ENCODE measurements at regions of chr2 and their contacts with region 1.

Region 1: DNA sequence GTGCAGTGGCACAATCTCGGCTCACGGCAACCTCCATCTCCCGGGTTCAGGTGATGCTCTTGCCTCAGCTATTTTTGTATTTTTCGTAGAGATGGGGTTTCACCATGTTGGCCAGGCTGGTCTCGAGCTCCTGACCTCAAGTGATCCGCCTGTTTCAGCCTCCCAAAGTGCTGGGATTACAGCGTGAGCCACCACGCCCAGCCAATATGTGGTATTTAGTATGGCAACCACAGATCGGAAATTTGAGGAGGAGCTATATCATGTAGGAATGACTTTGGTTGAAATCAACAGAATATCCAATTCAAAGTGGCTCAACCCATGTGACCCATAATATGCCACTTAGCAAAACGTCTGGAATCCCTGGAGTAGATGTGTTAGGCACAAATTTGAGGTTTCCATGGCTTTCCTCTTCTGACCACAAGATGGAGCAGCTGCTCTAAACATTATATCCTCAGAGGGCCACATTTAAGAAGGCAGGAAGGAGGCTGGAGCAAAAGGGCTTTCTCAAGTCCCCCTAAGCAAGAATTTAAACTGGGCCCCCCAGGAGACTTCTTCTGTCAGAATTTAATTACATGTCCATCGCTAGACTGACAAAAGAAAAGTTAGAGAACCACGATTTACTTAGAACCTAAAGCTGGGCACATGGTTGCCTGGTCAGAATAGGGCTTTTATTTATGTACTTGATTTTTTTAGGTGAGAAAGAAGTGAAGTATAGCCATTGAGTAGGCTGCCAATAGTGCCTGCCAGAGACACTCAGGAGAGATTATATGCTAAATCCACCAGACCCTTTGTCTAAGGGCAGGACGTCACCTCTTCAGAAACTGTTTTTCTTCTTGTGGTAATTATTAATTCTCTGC is 49.6 kb upstream of the ITSN2 start:
- DNase-seq: peak; percentile 60
- ATAC-seq: peak; percentile 84
- H3K4me3 Mint-ChIP-seq: no peak overlapping the region
- H3K27ac Mint-ChIP-seq: no peak overlapping the region
- H3K4me1 Mint-ChIP-seq: no peaks in the 10 kb centered on the region
- H3K27me3 Mint-ChIP-seq: peaks cover 3% of the 10 kb centered on the region

Region 2: GRCh38 chr2:24421668-24422067 is 11.7 kb after region 1 on chr2:
- CTCF ChIA-PET with region 1: interaction called, 26 read pairs
- POLR2A ChIA-PET with region 1: no interaction called
- DNase-seq: peak; percentile 64
- ATAC-seq: no peak
- H3K4me3 Mint-ChIP-seq: no peak overlapping the region
- H3K27ac Mint-ChIP-seq: no peak overlapping the region
- H3K4me1 Mint-ChIP-seq: no peaks in the 10 kb centered on the region
- H3K27me3 Mint-ChIP-seq: peaks cover 2% of the 10 kb centered on the region

Region 3: DNA sequence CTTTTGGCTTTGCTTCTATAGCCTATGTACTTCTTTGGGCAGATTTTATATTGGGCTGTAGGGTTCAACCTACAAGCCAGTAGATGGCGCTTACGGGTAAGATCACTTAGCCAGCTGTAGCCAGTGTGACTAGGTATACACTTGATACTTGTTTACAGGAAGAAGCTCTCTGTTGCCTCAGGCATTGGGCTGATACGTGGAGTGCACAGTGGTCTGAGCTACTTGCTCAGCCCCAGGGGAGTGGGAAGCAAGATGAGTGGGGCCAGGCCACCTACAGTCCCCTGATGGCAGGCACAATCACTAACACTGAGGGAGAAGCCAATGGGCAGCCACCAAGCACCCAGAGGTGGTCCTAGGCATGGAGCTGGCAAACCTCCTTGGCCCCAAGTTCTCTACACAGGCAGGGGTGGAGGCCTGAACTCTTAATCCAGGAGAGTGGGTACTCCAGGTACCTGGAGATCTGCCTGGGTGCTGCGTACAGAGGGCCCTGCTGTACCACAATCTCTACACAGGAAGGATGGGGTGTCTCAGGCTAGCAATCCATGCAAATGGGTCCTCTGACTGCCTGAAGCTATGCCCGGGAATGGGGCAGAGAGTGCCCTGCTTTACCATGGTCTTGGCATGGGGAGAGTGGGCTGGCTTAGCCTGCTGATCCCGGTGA is 203.4 kb after region 1 on chr2:
- CTCF ChIA-PET with region 1: interaction called, 17 read pairs
- POLR2A ChIA-PET with region 1: no interaction called
- DNase-seq: peak; percentile 65
- ATAC-seq: peak; percentile 87
- H3K4me3 Mint-ChIP-seq: no peak overlapping the region
- H3K27ac Mint-ChIP-seq: peak overlapping the region; percentile 75
- H3K4me1 Mint-ChIP-seq: peaks cover 4% of the 10 kb centered on the region
- H3K27me3 Mint-ChIP-seq: no peaks in the 10 kb centered on the region

Region 4: DNA sequence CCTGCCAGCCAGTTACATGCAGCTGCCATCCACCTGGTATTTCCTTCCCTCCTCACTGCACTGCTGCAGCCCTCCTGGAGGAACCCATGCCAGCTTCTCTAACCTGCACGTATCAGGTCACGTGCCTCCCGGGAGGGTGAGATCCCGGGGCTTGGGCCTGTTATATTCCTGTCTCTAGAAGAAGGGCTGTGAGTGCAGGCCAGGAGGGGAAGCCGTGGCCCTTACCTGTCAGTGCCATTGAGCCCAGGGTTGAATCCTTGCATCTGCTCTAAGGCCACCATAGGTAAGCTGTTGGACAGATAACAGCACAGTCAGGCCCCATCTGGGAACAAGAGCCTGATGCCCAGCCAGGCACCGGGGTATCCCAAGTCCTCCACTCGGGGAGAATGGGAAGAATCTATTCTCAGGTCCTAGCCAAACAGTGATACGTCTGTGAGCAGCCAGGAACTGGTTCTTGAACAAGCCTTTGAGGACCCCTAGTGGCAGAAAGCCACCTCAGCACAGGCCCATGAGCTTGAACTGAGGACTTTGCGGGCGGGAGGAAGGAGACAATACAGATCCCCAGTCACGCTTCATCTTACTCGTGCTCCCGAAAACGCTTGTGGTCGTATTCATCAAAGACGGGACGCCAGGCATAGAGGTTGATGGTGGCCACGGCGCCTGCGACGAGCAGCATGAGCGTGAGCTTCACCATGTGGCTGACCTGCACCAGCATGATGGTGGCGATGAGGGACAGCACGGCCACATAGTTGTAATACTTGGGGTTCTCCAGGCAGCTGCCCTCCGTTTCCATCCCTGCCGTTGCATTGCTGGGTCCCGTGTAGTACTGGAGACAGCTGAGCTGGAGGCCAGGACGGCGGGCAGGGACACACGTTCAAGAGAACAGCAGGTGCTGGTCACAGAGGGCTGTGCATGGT is 417.7 kb after region 1 on chr2:
- CTCF ChIA-PET with region 1: interaction called, 96 read pairs
- POLR2A ChIA-PET with region 1: interaction called, 3 read pairs
- DNase-seq: peak; percentile 80
- ATAC-seq: peak; percentile 84
- H3K4me3 Mint-ChIP-seq: no peak overlapping the region
- H3K27ac Mint-ChIP-seq: no peak overlapping the region
- H3K4me1 Mint-ChIP-seq: peaks cover 14% of the 10 kb centered on the region
- H3K27me3 Mint-ChIP-seq: no peaks in the 10 kb centered on the region

Region 5: GRCh38 chr2:25131567-25132298 is 721.8 kb after region 1 on chr2:
- CTCF ChIA-PET with region 1: interaction called, 32 read pairs
- POLR2A ChIA-PET with region 1: no interaction called
- DNase-seq: no peak
- ATAC-seq: peak; percentile 29
- H3K4me3 Mint-ChIP-seq: peak overlapping the region; percentile 44
- H3K27ac Mint-ChIP-seq: no peak overlapping the region
- H3K4me1 Mint-ChIP-seq: peaks cover 7% of the 10 kb centered on the region
- H3K27me3 Mint-ChIP-seq: peaks cover 52% of the 10 kb centered on the region